Ovary (tissue), 10 donors: ENCODE measurements at regions of chr4 and their contacts with region 1.

Region 1: DNA sequence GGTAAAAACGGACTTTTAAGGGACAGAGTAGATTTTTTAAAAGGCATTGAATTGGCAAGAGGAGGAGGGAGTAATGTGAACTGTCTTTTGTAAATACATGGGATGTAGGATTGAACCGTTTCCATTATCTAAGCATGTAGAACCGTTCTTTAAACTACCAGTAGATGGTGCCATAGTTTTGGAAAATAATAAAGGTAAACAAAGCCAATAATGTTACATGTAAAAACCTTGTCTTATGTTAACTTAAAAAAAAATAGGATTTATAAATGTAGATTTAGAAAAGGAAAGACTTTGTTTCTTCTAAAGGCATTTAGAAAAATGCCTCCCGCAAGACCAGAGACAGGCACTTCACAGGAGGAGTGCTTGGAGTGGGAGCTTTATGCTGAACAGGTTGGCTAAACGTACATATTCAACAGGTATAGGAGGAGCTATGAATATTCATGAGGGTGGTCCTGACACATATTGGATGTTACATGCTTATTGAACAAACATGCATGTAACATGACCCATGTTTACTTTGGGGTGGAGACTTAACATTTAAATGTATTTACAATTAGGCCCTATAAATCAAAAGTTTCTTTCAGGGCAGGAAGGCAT is 45.5 kb upstream of the FAM241A start:
- DNase-seq: no peak
- H3K4me3 ChIP-seq: no peak overlapping the region
- H3K27ac ChIP-seq: no peak overlapping the region
- H3K4me1 ChIP-seq: no peaks in the 10 kb centered on the region
- H3K27me3 ChIP-seq: no peaks in the 10 kb centered on the region
- CTCF ChIP-seq: peak; percentile 30 to 45 (median 42)
- EP300 ChIP-seq: no peak
- POLR2A ChIP-seq: no peak

Region 2: DNA sequence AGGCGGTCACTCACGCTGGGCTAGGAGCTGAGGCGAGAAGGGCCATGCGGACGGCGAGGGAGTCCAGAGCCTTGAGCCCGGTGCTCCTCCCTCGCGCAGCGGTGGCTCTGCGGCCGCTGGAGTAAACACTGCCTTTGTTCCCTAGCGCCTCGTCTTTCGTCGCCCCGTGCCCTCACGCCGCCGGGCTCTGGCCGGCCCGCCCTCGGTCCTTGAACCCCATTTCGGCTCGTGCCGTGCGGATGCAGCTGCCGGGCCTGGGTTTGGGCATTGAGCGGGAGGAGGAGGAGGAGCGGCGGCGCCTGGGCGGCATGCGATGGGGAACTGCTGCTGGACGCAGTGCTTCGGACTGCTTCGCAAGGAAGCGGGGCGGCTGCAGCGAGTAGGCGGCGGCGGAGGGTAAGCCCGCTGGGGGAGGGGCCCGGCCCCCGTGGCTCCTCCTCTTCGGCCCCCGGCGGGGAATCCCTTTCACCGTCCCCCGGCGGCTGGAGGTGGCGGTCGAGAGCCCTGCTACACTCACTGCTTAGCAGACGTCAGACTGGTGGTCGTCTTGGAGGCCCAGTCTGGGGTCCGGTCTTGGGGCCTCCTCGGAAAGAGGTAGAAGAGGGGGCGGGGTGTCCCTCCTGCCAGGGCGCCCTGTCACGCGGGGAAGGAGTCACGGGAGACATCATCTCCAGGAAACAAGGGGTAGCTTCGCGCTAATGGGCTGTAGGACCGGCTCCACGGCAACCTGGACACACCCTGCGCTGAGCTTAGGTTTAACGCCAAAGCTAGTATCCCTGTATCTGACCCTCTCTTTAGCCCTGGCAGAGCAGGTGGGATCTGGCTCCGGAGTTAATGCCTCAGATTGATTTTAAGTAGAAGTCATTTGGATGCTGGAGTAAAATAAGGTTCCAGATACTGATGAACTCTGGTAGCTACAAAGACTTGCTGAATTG is 132.2 kb after region 1 on chr4 and contains the start of gene AP1AR:
- intact Hi-C with region 1: loop called in 2 of 4 experiments (anchors 5 to 10 kb)
- DNase-seq: peak; percentile 79 to 89 (median 88)
- H3K4me3 ChIP-seq: peak within 1 kb of the TSS; percentile 99
- H3K27ac ChIP-seq: peak within 1 kb of the TSS; percentile 92 to 93
- H3K4me1 ChIP-seq: no peaks in the 10 kb centered on the region
- H3K27me3 ChIP-seq: no peaks in the 10 kb centered on the region
- CTCF ChIP-seq: peak; percentile 24 to 51 (median 38)
- EP300 ChIP-seq: no peak
- POLR2A ChIP-seq: peak; percentile 63
- total RNA-seq, gene AP1AR: 16.5 to 27.0 (median 19.9) TPM

Region 3: GRCh38 chr4:112523764-112524505 is 424.1 kb after region 1 on chr4:
- intact Hi-C with region 1: loop called in 2 of 4 experiments (anchors 10 kb)
- DNase-seq: peak; percentile 37 to 68 (median 47)
- H3K4me3 ChIP-seq: peak overlapping the region; percentile 25
- H3K27ac ChIP-seq: no peak overlapping the region
- H3K4me1 ChIP-seq: peaks cover 2% of the 10 kb centered on the region
- H3K27me3 ChIP-seq: peaks cover 6% of the 10 kb centered on the region
- CTCF ChIP-seq: peak; percentile 27 to 39 (median 28)
- EP300 ChIP-seq: no peak
- POLR2A ChIP-seq: no peak

Region 4: GRCh38 chr4:112604589-112604988 is 504.8 kb after region 1 on chr4:
- intact Hi-C with region 1: loop called in 2 of 4 experiments (anchors 10 kb)
- DNase-seq: peak in 3 of 5 donors; percentile 16 to 48 (median 34)
- H3K4me3 ChIP-seq: no peak overlapping the region
- H3K27ac ChIP-seq: no peak overlapping the region
- H3K4me1 ChIP-seq: no peaks in the 10 kb centered on the region
- H3K27me3 ChIP-seq: no peaks in the 10 kb centered on the region
- CTCF ChIP-seq: peak in 2 of 3 donors; percentile 13 to 33
- EP300 ChIP-seq: no peak
- POLR2A ChIP-seq: no peak

Region 5: DNA sequence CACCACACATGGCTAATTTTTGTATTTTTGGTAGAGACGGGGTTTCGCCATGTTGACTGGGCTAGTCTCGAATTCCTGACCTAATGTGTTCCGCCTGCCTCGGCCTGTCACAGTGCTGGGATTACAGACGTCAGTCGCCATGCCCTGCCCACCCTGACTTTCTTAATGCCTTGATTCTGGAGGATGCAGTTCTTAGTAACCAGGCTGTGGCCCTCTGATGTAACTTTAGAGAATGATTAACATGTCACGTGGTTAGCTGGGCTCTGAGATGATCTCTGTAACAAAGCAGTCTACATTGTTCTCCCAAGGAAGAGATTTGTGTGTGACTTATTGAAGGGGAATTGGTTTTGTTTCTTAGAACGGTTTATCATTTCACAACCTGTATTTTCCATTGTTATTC is 980.3 kb after region 1 on chr4:
- intact Hi-C with region 1: no loop called
- DNase-seq: no peak
- H3K4me3 ChIP-seq: no peak overlapping the region
- H3K27ac ChIP-seq: no peak overlapping the region
- H3K4me1 ChIP-seq: peaks cover 4% of the 10 kb centered on the region
- H3K27me3 ChIP-seq: no peaks in the 10 kb centered on the region
- CTCF ChIP-seq: no peak
- EP300 ChIP-seq: no peak
- POLR2A ChIP-seq: no peak